ENCODE measurements at regions of chr1 and their contacts with region 1.

Region 1: GRCh38 chr1:156025877-156026276 is 5.1 kb upstream of the SSR2 start:
- DNase-seq: peak in 25 of 35 experiments; percentile 1 to 56 (median 21)
- ATAC-seq: peak; percentile 64 to 79 (median 76)
- H3K4me3 ChIP-seq: no peak overlapping the region
- H3K4me3 Mint-ChIP-seq: no peak overlapping the region
- H3K27ac ChIP-seq: no peak overlapping the region
- H3K27ac Mint-ChIP-seq: peak overlapping the region in 1 of 2 donors; percentile 10
- H3K4me1 ChIP-seq: peaks cover 2 to 8% of the 10 kb centered on the region in 2 experiments
- H3K4me1 Mint-ChIP-seq: peaks cover 5 to 18% (median 8%) of the 10 kb centered on the region in 3 donors
- H3K27me3 ChIP-seq: peaks cover 0 to 5% of the 10 kb centered on the region in 2 experiments
- H3K27me3 Mint-ChIP-seq: peaks cover 0 to 5% of the 10 kb centered on the region in 2 donors

Region 2: GRCh38 chr1:155145491-155145890 is 880.4 kb before region 1 on chr1:
- CTCF ChIA-PET with region 1: no interaction called
- POLR2A ChIA-PET with region 1: interaction called in 1 of 2 experiments, 11 read pairs
- DNase-seq: no peak
- ATAC-seq: no peak
- H3K4me3 ChIP-seq: no peak overlapping the region
- H3K4me3 Mint-ChIP-seq: no peak overlapping the region
- H3K27ac ChIP-seq: no peak overlapping the region
- H3K27ac Mint-ChIP-seq: no peak overlapping the region
- H3K4me1 ChIP-seq: peaks cover 0 to 3% of the 10 kb centered on the region in 2 experiments
- H3K4me1 Mint-ChIP-seq: peaks cover 2 to 11% (median 3%) of the 10 kb centered on the region in 3 donors
- H3K27me3 ChIP-seq: peaks cover 0 to 24% of the 10 kb centered on the region in 2 experiments
- H3K27me3 Mint-ChIP-seq: peaks cover 19 to 28% of the 10 kb centered on the region in 2 donors

Region 3: DNA sequence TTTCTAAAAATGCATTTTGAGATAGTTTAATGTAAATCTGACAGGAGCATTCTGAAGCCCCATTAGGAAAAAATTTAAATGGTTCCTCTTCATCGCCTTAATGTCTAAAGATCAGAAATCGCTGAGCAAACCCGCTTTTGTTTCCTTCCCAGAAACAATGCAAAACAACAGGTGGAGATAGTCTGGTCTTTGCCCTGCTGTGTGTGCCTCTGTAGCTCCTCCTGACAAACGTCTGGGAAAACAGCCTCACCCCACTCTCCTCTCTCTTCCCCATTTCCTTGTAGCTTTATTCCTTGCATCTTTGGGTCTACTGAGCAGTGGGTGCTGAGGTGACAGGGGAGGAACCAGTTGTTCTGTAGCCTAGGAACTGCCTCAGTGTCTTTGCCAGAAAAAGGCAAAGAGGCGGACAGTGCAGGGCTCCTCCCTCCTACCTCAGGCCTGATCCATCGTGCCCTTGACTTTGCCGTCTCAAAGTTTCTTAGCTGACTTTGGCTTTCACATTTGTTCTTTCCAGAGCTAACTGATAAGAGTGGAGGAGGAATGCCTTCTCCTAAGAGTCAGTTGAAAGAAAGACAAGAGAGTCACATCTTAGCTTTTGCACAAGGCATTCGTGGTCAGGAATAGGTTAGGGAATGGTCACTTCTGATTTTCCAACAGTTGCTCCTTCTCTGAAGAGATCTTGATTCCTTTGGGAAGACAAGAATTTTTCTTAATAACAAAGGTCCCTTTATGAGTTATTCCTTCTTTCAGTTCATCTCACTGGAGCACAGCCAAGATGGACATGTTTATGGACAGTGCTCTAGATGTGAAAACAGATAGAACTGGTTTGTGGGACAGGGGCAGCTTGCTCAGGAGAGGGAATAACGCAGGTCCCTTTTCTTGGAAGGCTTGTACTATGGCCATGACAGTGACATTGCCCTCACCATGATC is 141.6 kb before region 1 on chr1:
- CTCF ChIA-PET with region 1: no interaction called
- POLR2A ChIA-PET with region 1: interaction called in 1 of 2 experiments, 14 read pairs
- DNase-seq: no peak
- ATAC-seq: no peak
- H3K4me3 ChIP-seq: no peak overlapping the region
- H3K4me3 Mint-ChIP-seq: no peak overlapping the region
- H3K27ac ChIP-seq: no peak overlapping the region
- H3K27ac Mint-ChIP-seq: no peak overlapping the region
- H3K4me1 ChIP-seq: no peaks in the 10 kb centered on the region
- H3K4me1 Mint-ChIP-seq: no peaks in the 10 kb centered on the region
- H3K27me3 ChIP-seq: no peaks in the 10 kb centered on the region
- H3K27me3 Mint-ChIP-seq: no peaks in the 10 kb centered on the region